B cell (primary cell): ENCODE measurements at regions of chr10 and their contacts with region 1.

Region 1: GRCh38 chr10:61896854-61897661 is 4.4 kb upstream of the ARID5B start:
- DNase-seq: peak; percentile 91
- ATAC-seq: peak; percentile 64
- H3K4me3 ChIP-seq: peak overlapping the region in 4 of 5 experiments; percentile 27 to 60 (median 48)
- H3K4me3 Mint-ChIP-seq: peak overlapping the region; percentile 98
- H3K27ac ChIP-seq: peak overlapping the region; percentile 38 to 47
- H3K27ac Mint-ChIP-seq: peak overlapping the region; percentile 94
- H3K4me1 ChIP-seq: peaks cover 29 to 33% of the 10 kb centered on the region in 2 donors
- H3K4me1 Mint-ChIP-seq: peaks cover 35% of the 10 kb centered on the region
- H3K27me3 ChIP-seq: no peaks in the 10 kb centered on the region
- H3K27me3 Mint-ChIP-seq: no peaks in the 10 kb centered on the region
- CTCF ChIP-seq: peak; percentile 77

Region 2: DNA sequence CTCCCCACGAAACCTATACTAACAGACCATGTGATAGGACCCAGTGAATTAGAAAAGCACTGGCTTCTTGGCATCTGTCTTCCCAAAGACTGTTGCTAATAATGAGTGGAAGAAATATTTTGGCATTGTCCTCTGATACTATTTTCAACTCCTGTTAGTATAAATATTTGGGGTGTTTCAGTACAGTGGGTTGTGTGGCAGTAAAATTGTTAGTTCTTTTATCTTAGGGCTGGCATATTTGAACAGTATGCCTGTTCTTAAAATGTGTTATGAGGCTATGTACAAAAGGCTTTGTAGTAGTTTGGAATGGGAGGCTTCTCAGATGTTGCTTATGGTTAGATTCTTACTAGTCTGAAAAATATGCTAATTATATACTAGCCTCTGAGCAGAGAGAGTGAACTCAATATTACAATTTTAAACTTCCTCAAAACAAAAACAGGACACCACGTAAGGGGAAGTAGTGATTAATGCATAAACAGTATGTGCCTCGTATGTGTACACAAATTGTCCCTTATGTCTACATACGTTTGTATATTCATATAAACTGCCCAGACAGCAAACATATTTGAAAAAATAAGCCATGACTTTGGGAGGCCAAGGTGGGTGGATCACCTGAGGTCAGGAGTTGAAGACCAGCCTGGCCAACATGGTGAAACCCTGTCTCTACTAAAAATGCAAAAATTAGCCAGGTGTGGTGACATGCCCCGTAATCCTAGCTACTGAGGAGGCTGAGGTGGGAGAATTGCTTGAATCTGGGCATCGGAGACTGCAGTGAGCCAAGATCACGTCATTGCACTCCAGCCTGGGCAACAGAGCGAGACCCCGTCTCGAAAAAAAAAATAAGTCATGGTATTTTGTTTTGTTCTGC is 119.8 kb after region 1 on chr10:
- CTCF ChIA-PET with region 1: interaction called, 48 read pairs
- POLR2A ChIA-PET with region 1: interaction called, 34 read pairs
- intact Hi-C with region 1: loop called (anchors 1 kb)
- DNase-seq: peak; percentile 88
- ATAC-seq: peak; percentile 71
- H3K4me3 ChIP-seq: peak overlapping the region in 3 of 5 experiments; percentile 10 to 50 (median 11)
- H3K4me3 Mint-ChIP-seq: peak overlapping the region; percentile 76
- H3K27ac ChIP-seq: peak overlapping the region; percentile 94 to 98
- H3K27ac Mint-ChIP-seq: peak overlapping the region; percentile 93
- H3K4me1 ChIP-seq: peaks cover 75 to 76% of the 10 kb centered on the region in 2 donors
- H3K4me1 Mint-ChIP-seq: peaks cover 80% of the 10 kb centered on the region
- H3K27me3 ChIP-seq: no peaks in the 10 kb centered on the region
- H3K27me3 Mint-ChIP-seq: no peaks in the 10 kb centered on the region
- CTCF ChIP-seq: no peak

Region 3: DNA sequence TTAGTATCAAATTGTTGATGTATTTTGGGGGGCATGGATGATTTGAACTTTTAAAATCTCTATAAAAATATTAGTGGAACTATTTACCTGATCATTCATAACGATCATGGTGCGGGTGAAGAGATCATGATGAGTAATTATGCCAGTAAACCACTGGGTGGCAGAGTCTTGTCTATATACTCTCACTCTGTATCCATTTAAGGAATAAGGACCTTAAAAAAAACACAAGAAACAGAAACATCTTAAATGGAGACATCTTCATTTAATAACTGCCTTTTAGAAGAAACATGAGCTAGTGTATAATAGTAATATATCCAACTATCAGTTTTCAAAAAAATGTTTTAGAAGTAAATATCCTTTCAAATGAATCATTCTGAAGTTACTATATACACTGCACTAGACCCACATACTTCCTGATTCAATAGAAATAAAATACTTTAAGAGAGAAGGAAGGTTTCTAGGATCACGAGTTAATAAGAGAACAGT is 1320.1 kb after region 1 on chr10:
- CTCF ChIA-PET with region 1: no interaction called
- POLR2A ChIA-PET with region 1: no interaction called
- intact Hi-C with region 1: no loop called
- DNase-seq: peak; percentile 73
- ATAC-seq: peak; percentile 88
- H3K4me3 ChIP-seq: no peak overlapping the region
- H3K4me3 Mint-ChIP-seq: no peak overlapping the region
- H3K27ac ChIP-seq: peak overlapping the region in 1 of 2 donors; percentile 25
- H3K27ac Mint-ChIP-seq: peak overlapping the region; percentile 43
- H3K4me1 ChIP-seq: peaks cover 29 to 39% of the 10 kb centered on the region in 2 donors
- H3K4me1 Mint-ChIP-seq: peaks cover 54% of the 10 kb centered on the region
- H3K27me3 ChIP-seq: no peaks in the 10 kb centered on the region
- H3K27me3 Mint-ChIP-seq: no peaks in the 10 kb centered on the region
- CTCF ChIP-seq: peak; percentile 83